Activated T-helper 2 cell treated with anti-CD3 and anti-CD28 coated beads, Interferon-gamma antibody, Interleukin-2, Interleukin-4, amounts not matched to agents 10 μg/mL and 5 μg/mL and 100 μg/mL, durations not matched to agents 14 hours and 24 hours and 36 hours (primary cell): ENCODE measurements at regions of chr11 and their contacts with region 1.

Region 1: DNA sequence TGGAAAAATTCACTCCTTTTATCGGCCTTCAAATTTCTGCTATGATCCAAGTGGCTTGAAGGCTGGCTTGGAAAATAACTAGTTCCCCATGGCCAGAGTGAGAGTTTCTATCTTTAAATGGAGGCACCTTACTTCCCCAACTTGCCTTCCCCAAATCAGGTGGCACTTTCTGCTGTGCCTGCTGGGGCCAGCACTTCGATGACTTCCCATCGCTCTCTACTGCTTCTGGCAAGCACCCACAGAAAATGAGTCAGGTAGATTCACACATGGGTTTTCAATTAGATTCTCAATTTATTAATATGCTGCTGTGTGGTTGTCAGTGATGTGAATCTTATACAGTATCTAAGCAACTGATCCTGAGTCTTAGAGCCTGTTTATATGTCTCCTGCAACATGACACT is 398.8 kb upstream of the RAG2 start:
- DNase-seq: no peak
- H3K4me3 Mint-ChIP-seq: no peak overlapping the region
- H3K27ac Mint-ChIP-seq: no peak overlapping the region
- H3K4me1 Mint-ChIP-seq: no peaks in the 10 kb centered on the region
- H3K27me3 Mint-ChIP-seq: no peaks in the 10 kb centered on the region

Region 2: DNA sequence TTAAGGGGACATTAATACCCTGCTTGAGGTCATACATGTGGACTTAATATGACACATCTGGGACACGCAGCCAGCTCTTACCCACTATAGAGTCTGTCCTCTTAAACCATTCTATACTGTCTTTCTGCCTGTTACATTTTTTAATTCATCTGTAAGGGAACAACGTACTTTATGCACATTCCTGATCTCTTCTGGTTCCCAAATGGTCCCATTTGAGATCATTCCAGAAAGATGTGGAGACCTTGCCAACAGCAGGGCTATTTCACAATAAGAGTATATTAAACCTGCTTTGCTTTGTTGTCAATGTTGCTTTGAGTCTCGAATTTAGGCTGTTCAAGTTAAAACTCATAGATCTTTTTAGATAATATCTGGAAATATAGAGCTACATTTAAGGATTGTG is 66.5 kb before region 1 on chr11:
- intact Hi-C with region 1: loop called (anchors 10 kb)
- DNase-seq: no peak
- H3K4me3 Mint-ChIP-seq: no peak overlapping the region
- H3K27ac Mint-ChIP-seq: no peak overlapping the region
- H3K4me1 Mint-ChIP-seq: no peaks in the 10 kb centered on the region
- H3K27me3 Mint-ChIP-seq: no peaks in the 10 kb centered on the region

Region 3: GRCh38 chr11:37277896-37278465 is 281.2 kb after region 1 on chr11:
- intact Hi-C with region 1: no loop called
- DNase-seq: no peak
- H3K4me3 Mint-ChIP-seq: no peak overlapping the region
- H3K27ac Mint-ChIP-seq: no peak overlapping the region
- H3K4me1 Mint-ChIP-seq: no peaks in the 10 kb centered on the region
- H3K27me3 Mint-ChIP-seq: no peaks in the 10 kb centered on the region